ENCODE measurements at regions of chr12 and their contacts with region 1.

Region 1: DNA sequence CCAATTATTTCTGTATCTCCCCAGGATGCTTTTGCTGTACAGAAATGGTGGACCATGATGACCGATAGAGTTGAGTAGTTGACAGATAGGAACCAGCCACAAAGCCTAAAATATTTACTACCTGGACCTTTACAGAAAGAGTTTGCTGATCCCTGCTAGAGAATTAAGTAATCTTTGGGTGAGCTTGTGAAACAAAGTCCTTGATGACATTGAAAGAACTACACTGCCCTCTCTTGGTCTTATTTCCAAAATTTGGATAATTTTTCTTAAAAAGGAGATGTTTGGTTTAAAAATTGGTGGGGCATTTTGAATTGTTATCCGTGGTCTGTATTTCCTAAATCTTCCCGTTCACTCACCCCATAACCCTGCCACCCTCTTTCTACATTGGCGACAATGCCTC is 13.7 kb upstream of the TCTN1 start:
- DNase-seq: peak; percentile 59
- H3K4me3 ChIP-seq: no peak overlapping the region
- H3K27ac ChIP-seq: no peak overlapping the region
- H3K4me1 ChIP-seq: no peaks in the 10 kb centered on the region
- H3K27me3 ChIP-seq: no peaks in the 10 kb centered on the region
- CTCF ChIP-seq: peak; percentile 10 to 15
- POLR2A ChIP-seq: no peak

Region 2: GRCh38 chr12:109833307-109834189 is 766.7 kb before region 1 on chr12 and contains the start of gene TRPV4:
- CTCF ChIA-PET with region 1: no interaction called
- POLR2A ChIA-PET with region 1: no interaction called
- dilution Hi-C with region 1: no loop called
- intact Hi-C with region 1: no loop called
- DNase-seq: peak; percentile 64
- H3K4me3 ChIP-seq: peak within 1 kb of the TSS; percentile 50 to 63 (median 58)
- H3K27ac ChIP-seq: peak within 1 kb of the TSS; percentile 27
- H3K4me1 ChIP-seq: peaks cover 24% of the 10 kb centered on the region
- H3K27me3 ChIP-seq: no peaks in the 10 kb centered on the region
- CTCF ChIP-seq: no peak
- POLR2A ChIP-seq: peak; percentile 70
- total RNA-seq, gene TRPV4: 8.8 and 12.3 TPM in 2 replicates

Region 3: DNA sequence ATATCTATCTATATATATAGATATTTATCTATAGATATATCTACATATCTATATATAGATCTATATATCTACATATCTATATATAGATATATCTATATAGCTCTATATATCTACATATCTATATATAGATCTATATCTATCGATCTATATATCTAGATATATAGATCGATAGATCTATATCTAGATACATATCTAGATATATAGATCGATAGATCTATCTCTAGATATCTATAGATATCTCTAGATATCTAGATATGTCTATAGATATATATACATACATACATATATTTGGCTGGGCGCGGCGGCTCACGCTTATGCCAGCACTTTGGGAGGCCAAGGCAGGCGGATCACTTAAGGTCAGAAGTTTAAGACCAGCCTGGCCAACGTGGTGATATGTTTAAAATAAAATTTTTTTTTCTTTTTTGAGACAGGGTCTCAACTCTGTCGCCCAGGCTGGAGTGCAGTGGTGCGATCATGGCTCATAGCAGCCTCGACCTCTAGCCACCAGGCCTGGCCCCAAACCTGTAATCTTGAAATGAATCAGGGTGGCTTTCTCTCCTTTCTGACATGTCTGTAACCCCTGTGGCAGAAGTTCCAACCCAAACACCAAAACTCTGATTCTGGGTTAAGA is 168.2 kb before region 1 on chr12:
- CTCF ChIA-PET with region 1: interaction called, 14 read pairs
- POLR2A ChIA-PET with region 1: no interaction called
- dilution Hi-C with region 1: no loop called
- intact Hi-C with region 1: no loop called
- DNase-seq: no peak
- H3K4me3 ChIP-seq: no peak overlapping the region
- H3K27ac ChIP-seq: no peak overlapping the region
- H3K4me1 ChIP-seq: peaks cover 12% of the 10 kb centered on the region
- H3K27me3 ChIP-seq: no peaks in the 10 kb centered on the region
- CTCF ChIP-seq: no peak
- POLR2A ChIP-seq: no peak

Region 4: GRCh38 chr12:110501752-110502738 is 98.2 kb before region 1 on chr12 and contains the starts of genes RAD9B and VPS29:
- CTCF ChIA-PET with region 1: interaction called, 40 read pairs
- POLR2A ChIA-PET with region 1: no interaction called
- dilution Hi-C with region 1: no loop called
- intact Hi-C with region 1: loop called (anchors 1 kb)
- DNase-seq: peak; percentile 99
- H3K4me3 ChIP-seq: peak within 1 kb of the TSS; percentile 58 to 94 (median 80)
- H3K27ac ChIP-seq: peak within 1 kb of the TSS; percentile 68
- H3K4me1 ChIP-seq: peaks cover 13% of the 10 kb centered on the region
- H3K27me3 ChIP-seq: no peaks in the 10 kb centered on the region
- CTCF ChIP-seq: no peak
- POLR2A ChIP-seq: peak; percentile 86
- total RNA-seq, gene RAD9B: 0.15 TPM in 1 of 2 replicates, not detected in the other
- total RNA-seq, gene VPS29: 147 and 155 TPM in 2 replicates

Region 5: DNA sequence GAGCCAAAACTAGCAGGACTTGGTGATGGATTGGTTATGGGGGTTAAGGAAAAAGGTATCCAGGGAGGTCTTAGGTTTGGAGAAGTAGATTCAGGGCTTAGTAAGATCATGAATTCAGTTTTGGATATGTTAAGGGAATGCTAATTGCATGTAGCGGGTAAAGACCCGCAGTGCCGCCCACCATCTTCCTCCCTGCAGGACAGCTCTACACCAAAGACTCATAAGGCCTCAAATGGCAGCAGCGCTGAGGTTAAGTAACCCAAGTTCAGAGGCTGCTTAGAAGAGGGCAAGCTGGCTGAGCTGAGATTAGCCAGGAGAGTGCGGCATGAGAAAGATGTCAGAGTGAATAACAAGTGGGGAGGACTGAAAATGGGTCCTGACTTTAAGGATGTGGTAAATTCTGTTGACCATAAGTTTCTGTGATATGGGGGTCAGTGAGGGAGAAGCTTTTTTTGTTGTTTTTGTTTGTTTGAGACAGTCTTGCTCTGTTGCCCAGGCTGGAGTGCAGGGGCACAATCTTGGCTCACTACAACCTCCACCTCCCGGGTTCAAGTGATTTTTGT is 71.9 kb before region 1 on chr12:
- CTCF ChIA-PET with region 1: interaction called, 11 read pairs
- POLR2A ChIA-PET with region 1: no interaction called
- dilution Hi-C with region 1: no loop called
- intact Hi-C with region 1: no loop called
- DNase-seq: no peak
- H3K4me3 ChIP-seq: no peak overlapping the region
- H3K27ac ChIP-seq: no peak overlapping the region
- H3K4me1 ChIP-seq: no peaks in the 10 kb centered on the region
- H3K27me3 ChIP-seq: no peaks in the 10 kb centered on the region
- CTCF ChIP-seq: no peak
- POLR2A ChIP-seq: no peak

Region 6: GRCh38 chr12:110555577-110556406 is 44.5 kb before region 1 on chr12:
- CTCF ChIA-PET with region 1: interaction called, 88 read pairs
- POLR2A ChIA-PET with region 1: no interaction called
- dilution Hi-C with region 1: no loop called
- intact Hi-C with region 1: loop called (anchors 1 kb)
- DNase-seq: no peak
- H3K4me3 ChIP-seq: no peak overlapping the region
- H3K27ac ChIP-seq: no peak overlapping the region
- H3K4me1 ChIP-seq: no peaks in the 10 kb centered on the region
- H3K27me3 ChIP-seq: no peaks in the 10 kb centered on the region
- CTCF ChIP-seq: no peak
- POLR2A ChIP-seq: no peak

Region 7: GRCh38 chr12:110698171-110698902 is 98.1 kb after region 1 on chr12:
- CTCF ChIA-PET with region 1: no interaction called
- POLR2A ChIA-PET with region 1: no interaction called
- dilution Hi-C with region 1: no loop called
- intact Hi-C with region 1: loop called (anchors 1 kb)
- DNase-seq: peak; percentile 92
- H3K4me3 ChIP-seq: no peak overlapping the region
- H3K27ac ChIP-seq: peak overlapping the region; percentile 36
- H3K4me1 ChIP-seq: peaks cover 5% of the 10 kb centered on the region
- H3K27me3 ChIP-seq: no peaks in the 10 kb centered on the region
- CTCF ChIP-seq: peak; percentile 67 to 81
- POLR2A ChIP-seq: peak; percentile 24